PC-9 (cell line): ENCODE measurements at regions of chr9 and their contacts with region 1.

Region 1: DNA sequence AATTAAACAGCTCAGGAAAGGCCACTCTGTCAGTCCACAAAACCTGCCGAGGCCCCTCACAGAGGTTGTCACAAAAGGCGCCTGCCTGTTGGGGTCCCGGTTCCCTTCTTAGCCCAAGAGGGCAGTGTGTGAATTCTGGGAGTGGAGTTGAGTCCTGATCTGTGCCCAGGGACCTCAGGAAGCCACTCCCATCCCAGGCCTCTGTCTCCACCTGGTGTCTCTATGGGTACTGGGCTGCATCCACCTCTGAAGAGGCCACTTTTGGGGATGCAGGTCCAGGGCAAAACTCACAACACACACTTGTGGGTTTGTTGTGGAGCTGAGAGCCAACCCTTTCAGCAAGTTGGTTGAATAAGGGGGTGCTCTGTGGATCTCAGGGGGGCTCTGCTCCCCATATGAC is 74.3 kb upstream of the STXBP1 start:
- DNase-seq: no peak
- H3K4me3 ChIP-seq: no peak overlapping the region
- H3K27ac ChIP-seq: 0 out of 2 replicates have a peak overlapping the region, but pooled peaks have one; percentile 12
- H3K4me1 ChIP-seq: peaks cover 22% of the 10 kb centered on the region
- H3K27me3 ChIP-seq: no peaks in the 10 kb centered on the region
- CTCF ChIP-seq: 0 out of 2 replicates have a peak, but pooled peaks have one; percentile 27

Region 2: DNA sequence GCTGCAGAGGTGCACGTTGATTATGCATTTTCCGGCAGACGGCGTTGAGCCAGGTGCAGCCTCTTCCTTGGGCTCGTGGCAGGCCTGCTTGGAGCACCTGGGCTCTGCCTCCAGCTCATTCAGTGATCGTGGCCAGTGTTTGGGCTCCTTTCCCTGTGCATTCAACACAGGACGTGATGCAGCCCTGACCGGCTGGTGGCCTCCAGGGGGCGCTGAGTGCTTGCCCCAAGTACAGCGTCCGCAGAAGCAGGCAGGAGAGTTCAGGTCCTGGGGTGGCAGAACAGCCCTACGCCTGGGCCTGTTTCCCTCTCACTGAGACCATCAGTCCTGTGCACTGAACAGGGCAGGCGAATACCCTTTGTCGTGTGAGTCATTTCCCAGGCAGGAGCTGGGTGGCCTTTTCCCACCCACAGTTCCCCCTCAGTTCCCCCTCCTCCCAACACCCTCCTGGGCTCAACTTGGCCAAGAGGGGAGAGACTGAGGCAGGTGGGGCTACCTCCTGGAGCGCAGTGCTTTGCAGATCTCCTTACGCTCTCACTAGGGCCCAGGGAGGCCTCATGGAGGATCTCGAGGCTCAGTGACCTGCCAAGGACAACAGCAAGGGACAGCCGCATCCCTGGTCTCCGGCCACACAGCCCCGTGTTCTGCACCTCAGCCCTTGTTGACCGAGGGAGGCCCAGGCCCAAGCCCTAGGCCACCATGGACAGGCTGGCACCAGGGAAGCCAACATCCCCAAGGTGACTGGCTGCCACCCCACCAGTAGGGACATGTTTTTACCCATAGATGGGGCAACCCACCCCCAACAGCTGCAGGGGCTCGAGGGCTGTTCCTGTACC is 33.6 kb before region 1 on chr9:
- CTCF ChIA-PET with region 1: interaction called, 4 read pairs
- POLR2A ChIA-PET with region 1: interaction called, 3 read pairs
- intact Hi-C with region 1: loop called (anchors 1 kb)
- DNase-seq: peak; percentile 60 to 85
- H3K4me3 ChIP-seq: no peak overlapping the region
- H3K27ac ChIP-seq: no peak overlapping the region
- H3K4me1 ChIP-seq: no peaks in the 10 kb centered on the region
- H3K27me3 ChIP-seq: no peaks in the 10 kb centered on the region
- CTCF ChIP-seq: peak; percentile 85

Region 3: GRCh38 chr9:127555768-127556397 is 18.1 kb after region 1 on chr9:
- CTCF ChIA-PET with region 1: no interaction called
- POLR2A ChIA-PET with region 1: interaction called, 10 read pairs
- intact Hi-C with region 1: no loop called
- DNase-seq: peak; percentile 94
- H3K4me3 ChIP-seq: no peak overlapping the region
- H3K27ac ChIP-seq: peak overlapping the region; percentile 74
- H3K4me1 ChIP-seq: peaks cover 69% of the 10 kb centered on the region
- H3K27me3 ChIP-seq: no peaks in the 10 kb centered on the region
- CTCF ChIP-seq: no peak